Testis (tissue), 5 donors: ENCODE measurements at regions of chr15 and their contacts with region 1.

Region 1: DNA sequence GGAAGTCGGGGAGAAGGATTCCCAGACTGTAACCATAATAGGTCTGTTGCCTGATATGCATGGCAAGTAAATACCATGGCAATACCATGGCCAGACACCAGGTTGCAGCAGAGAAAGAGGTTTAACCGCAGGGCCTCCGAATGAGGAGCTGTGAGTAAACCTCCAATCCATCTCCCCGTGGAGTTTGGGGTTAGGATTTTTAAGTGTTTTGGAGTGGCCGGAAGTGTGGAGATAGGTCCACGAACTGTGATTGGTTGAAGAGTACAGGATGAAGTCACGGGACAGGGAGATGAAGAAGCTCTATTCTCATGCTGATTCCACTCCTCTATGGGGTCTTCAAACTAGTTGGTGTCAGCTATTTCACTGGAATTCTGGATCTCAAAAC is 127.9 kb downstream of the ST8SIA2 start:
- DNase-seq: peak; percentile 90
- H3K4me3 ChIP-seq: no peak overlapping the region
- H3K27ac ChIP-seq: no peak overlapping the region
- H3K4me1 ChIP-seq: no peaks in the 10 kb centered on the region
- H3K27me3 ChIP-seq: no peaks in the 10 kb centered on the region
- CTCF ChIP-seq: peak; percentile 71 to 90 (median 81)
- POLR2A ChIP-seq: no peak

Region 2: GRCh38 chr15:92625251-92625980 is 103.8 kb after region 1 on chr15:
- intact Hi-C with region 1: loop called (anchors 10 kb)
- DNase-seq: no peak
- H3K4me3 ChIP-seq: no peak overlapping the region
- H3K27ac ChIP-seq: peak overlapping the region in 1 of 2 donors; percentile 61
- H3K4me1 ChIP-seq: peaks cover 13% of the 10 kb centered on the region
- H3K27me3 ChIP-seq: no peaks in the 10 kb centered on the region
- CTCF ChIP-seq: no peak
- POLR2A ChIP-seq: no peak

Region 3: DNA sequence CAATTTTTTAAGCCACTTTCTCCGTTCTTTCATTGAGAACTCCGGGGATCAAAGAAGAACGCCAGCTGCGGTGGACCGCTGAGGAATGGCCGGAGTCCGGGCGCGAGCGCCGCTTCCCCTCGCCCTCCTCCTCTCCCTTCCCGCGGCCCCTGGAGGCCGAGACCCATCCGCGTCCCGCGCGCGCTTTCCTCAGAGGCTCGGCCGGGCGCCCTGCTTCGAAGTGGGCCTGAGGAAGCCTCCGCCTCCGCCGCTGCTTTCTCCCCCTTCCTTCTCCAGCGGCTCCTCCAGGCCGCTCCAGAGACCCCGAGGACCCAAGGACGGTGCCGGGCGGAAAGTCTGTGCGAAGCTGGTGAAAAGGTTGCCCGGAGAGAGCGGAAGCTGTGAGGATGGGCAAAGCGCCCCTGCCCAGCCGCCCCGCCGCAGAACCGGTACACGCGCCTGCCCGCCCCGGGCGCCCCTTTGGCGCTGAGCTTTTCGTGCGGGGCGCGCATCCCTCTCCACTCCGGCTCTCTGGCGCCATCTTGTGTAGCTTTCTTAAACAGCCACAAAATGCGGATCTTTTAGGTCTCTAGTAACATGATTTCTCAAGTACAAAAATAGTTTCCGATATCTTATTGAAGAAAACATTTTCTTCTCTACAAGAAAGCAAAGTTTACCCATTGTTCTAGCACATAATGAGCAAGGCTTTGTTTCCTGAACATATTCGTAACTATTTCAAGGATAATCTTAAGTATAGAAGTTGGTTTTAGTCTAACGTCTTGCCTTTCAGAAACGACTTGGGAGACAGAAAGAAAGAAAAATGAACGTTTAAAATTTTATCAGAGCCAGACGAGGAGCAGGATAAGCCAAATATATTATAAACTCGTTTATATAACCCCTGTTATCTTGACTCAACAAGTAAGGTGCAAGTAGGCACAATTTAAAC is 193.1 kb after region 1 on chr15:
- intact Hi-C with region 1: loop called (anchors 10 kb)
- DNase-seq: peak; percentile 89
- H3K4me3 ChIP-seq: peak overlapping the region; percentile 55 to 67
- H3K27ac ChIP-seq: peak overlapping the region; percentile 84 to 94
- H3K4me1 ChIP-seq: peaks cover 8% of the 10 kb centered on the region
- H3K27me3 ChIP-seq: no peaks in the 10 kb centered on the region
- CTCF ChIP-seq: peak; percentile 85 to 90 (median 87)
- POLR2A ChIP-seq: no peak